ENCODE measurements at regions of chr2 and their contacts with region 1.

Region 1: GRCh38 chr2:31688282-31688681 is 107.5 kb upstream of the SRD5A2 start:
- DNase-seq: peak; percentile 15
- H3K4me3 Mint-ChIP-seq: no peak overlapping the region
- H3K27ac Mint-ChIP-seq: no peak overlapping the region
- H3K4me1 Mint-ChIP-seq: no peaks in the 10 kb centered on the region
- H3K27me3 Mint-ChIP-seq: peaks cover 3% of the 10 kb centered on the region

Region 2: GRCh38 chr2:30721668-30722647 is 966.3 kb before region 1 on chr2:
- CTCF ChIA-PET with region 1: no interaction called
- intact Hi-C with region 1: no loop called
- DNase-seq: no peak
- H3K4me3 Mint-ChIP-seq: no peak overlapping the region
- H3K27ac Mint-ChIP-seq: no peak overlapping the region
- H3K4me1 Mint-ChIP-seq: no peaks in the 10 kb centered on the region
- H3K27me3 Mint-ChIP-seq: peaks cover 7% of the 10 kb centered on the region

Region 3: GRCh38 chr2:31903109-31903780 is 215.0 kb after region 1 on chr2:
- CTCF ChIA-PET with region 1: no interaction called
- intact Hi-C with region 1: no loop called
- DNase-seq: no peak
- H3K4me3 Mint-ChIP-seq: no peak overlapping the region
- H3K27ac Mint-ChIP-seq: no peak overlapping the region
- H3K4me1 Mint-ChIP-seq: peaks cover 9% of the 10 kb centered on the region
- H3K27me3 Mint-ChIP-seq: no peaks in the 10 kb centered on the region

Region 4: GRCh38 chr2:32135409-32135808 is 447.1 kb after region 1 on chr2:
- CTCF ChIA-PET with region 1: no interaction called
- intact Hi-C with region 1: loop called (anchors 5 kb)
- DNase-seq: no peak
- H3K4me3 Mint-ChIP-seq: no peak overlapping the region
- H3K27ac Mint-ChIP-seq: no peak overlapping the region
- H3K4me1 Mint-ChIP-seq: no peaks in the 10 kb centered on the region
- H3K27me3 Mint-ChIP-seq: no peaks in the 10 kb centered on the region

Region 5: DNA sequence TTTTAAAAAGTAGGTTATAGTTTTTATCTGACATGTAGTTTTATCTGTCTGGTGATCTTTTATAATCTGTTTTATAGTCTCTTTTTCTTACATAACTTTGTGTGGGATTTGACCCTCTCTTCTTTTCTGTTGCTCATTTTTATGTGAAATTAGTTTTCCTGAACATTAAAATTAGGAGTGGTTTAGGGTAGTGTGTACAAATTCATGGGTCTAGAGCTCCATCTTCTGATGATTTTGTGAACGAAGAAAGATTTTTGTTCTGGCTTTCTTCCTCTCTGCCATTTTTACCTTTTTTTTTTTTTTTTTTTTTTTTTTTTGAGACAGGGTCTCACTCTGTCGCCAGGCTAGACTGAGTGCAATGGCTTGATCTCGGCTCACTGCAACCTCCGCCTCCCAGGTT is 524.0 kb after region 1 on chr2:
- CTCF ChIA-PET with region 1: no interaction called
- intact Hi-C with region 1: loop called (anchors 2 kb)
- DNase-seq: no peak
- H3K4me3 Mint-ChIP-seq: no peak overlapping the region
- H3K27ac Mint-ChIP-seq: no peak overlapping the region
- H3K4me1 Mint-ChIP-seq: no peaks in the 10 kb centered on the region
- H3K27me3 Mint-ChIP-seq: no peaks in the 10 kb centered on the region

Region 6: GRCh38 chr2:32330136-32330535 is 641.9 kb after region 1 on chr2:
- CTCF ChIA-PET with region 1: no interaction called
- intact Hi-C with region 1: loop called (anchors 10 kb)
- DNase-seq: no peak
- H3K4me3 Mint-ChIP-seq: no peak overlapping the region
- H3K27ac Mint-ChIP-seq: no peak overlapping the region
- H3K4me1 Mint-ChIP-seq: no peaks in the 10 kb centered on the region
- H3K27me3 Mint-ChIP-seq: no peaks in the 10 kb centered on the region